K562 (cell line): ENCODE measurements at regions of chr11 and their contacts with region 1.

Region 1: DNA sequence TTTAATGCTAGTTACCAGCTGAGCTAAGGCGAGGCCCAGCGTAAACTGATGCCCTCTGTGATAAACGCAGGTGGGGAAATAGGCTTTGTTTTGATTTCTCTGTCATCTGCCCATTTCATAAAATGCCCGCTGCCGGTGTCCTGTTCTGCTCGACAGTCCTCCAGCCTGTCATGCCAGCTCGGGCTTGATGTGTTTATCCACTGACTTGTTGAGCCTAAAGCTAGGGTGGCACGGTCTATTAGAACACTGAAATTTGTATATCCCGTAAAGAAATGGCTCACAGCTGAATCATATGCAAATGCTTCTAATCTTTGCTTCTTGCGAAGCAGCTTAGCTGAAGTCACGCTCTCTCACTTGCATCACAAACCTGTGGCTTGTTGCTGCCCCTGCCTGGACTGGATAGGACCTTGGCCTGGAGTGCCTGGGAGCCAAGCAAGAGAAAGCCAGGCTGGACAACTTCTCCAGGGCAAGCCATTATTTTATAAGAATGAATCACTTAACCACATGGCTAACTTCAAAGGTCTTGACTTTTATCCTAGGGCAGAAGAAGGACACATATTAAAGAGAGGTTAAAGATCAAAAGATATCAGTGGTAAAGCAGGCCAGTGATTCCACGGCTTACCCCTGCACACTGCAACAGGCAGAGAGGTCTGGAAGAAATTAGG is 33.1 kb downstream of the EHF start:
- DNase-seq: peak in 2 of 4 experiments; percentile 24 to 66
- ATAC-seq: peak; percentile 74
- H3K4me3 ChIP-seq: no peak overlapping the region
- H3K27ac ChIP-seq: no peak overlapping the region
- H3K4me1 ChIP-seq: peaks cover 0 to 45% of the 10 kb centered on the region in 2 experiments; a peak in 3 of 5 replicates
- H3K27me3 ChIP-seq: no peaks in the 10 kb centered on the region
- CTCF ChIP-seq: peak; percentile 31 to 55 (median 53); a peak in 5 of 6 replicates
- EP300 ChIP-seq: no peak
- POLR2A ChIP-seq: no peak
- RAD21 ChIP-seq: peak; percentile 58 to 70

Region 2: GRCh38 chr11:34192481-34193401 is 461.2 kb before region 1 on chr11:
- CTCF ChIA-PET with region 1: no interaction called
- POLR2A ChIA-PET with region 1: no interaction called
- in situ Hi-C with region 1: no loop called
- intact Hi-C with region 1: no loop called
- DNase-seq: no peak
- ATAC-seq: peak; percentile 27; the same call in 2 of the 3 replicates
- H3K4me3 ChIP-seq: no peak overlapping the region
- H3K27ac ChIP-seq: no peak overlapping the region
- H3K4me1 ChIP-seq: no peaks in the 10 kb centered on the region
- H3K27me3 ChIP-seq: peaks cover 18 to 62% of the 10 kb centered on the region in 2 experiments; a peak in 4 of 5 replicates
- CTCF ChIP-seq: no peak
- EP300 ChIP-seq: no peak
- POLR2A ChIP-seq: no peak
- RAD21 ChIP-seq: no peak

Region 3: GRCh38 chr11:34614344-34615104 is 39.4 kb before region 1 on chr11:
- CTCF ChIA-PET with region 1: no interaction called
- POLR2A ChIA-PET with region 1: interaction called, 4 read pairs
- in situ Hi-C with region 1: loop called (anchors 5 kb)
- intact Hi-C with region 1: loop called (anchors 5 kb)
- DNase-seq: no peak
- ATAC-seq: peak; percentile 27; the same call in 1 of the 3 replicates
- H3K4me3 ChIP-seq: no peak overlapping the region
- H3K27ac ChIP-seq: no peak overlapping the region
- H3K4me1 ChIP-seq: peaks cover 4 to 44% of the 10 kb centered on the region in 2 experiments; a peak in 4 of 5 replicates
- H3K27me3 ChIP-seq: no peaks in the 10 kb centered on the region
- CTCF ChIP-seq: no peak
- EP300 ChIP-seq: no peak
- POLR2A ChIP-seq: no peak
- RAD21 ChIP-seq: no peak

Region 4: GRCh38 chr11:34640050-34640923 is 13.7 kb before region 1 on chr11:
- CTCF ChIA-PET with region 1: no interaction called
- POLR2A ChIA-PET with region 1: interaction called, 17 read pairs
- in situ Hi-C with region 1: no loop called
- intact Hi-C with region 1: no loop called
- DNase-seq: peak in 1 of 4 experiments; percentile 41
- ATAC-seq: peak; percentile 73
- H3K4me3 ChIP-seq: no peak overlapping the region
- H3K27ac ChIP-seq: no peak overlapping the region
- H3K4me1 ChIP-seq: peaks cover 5 to 6% of the 10 kb centered on the region in 2 experiments; a peak in 4 of 5 replicates
- H3K27me3 ChIP-seq: no peaks in the 10 kb centered on the region
- CTCF ChIP-seq: no peak
- EP300 ChIP-seq: no peak
- POLR2A ChIP-seq: no peak
- RAD21 ChIP-seq: no peak